Activated CD4-positive, alpha-beta T cell treated with anti-CD3 and anti-CD28 coated beads for 36 hours (primary cell): ENCODE measurements at regions of chr17 and their contacts with region 1.

Region 1: GRCh38 chr17:80263253-80264204 is 2.9 kb downstream of the RNF213 start:
- DNase-seq: peak; percentile 94
- ATAC-seq: peak; percentile 37
- H3K4me3 Mint-ChIP-seq: peak overlapping the region; percentile 98
- H3K27ac Mint-ChIP-seq: peak overlapping the region; percentile 91
- H3K4me1 Mint-ChIP-seq: peaks cover 55% of the 10 kb centered on the region
- H3K27me3 Mint-ChIP-seq: no peaks in the 10 kb centered on the region

Region 2: DNA sequence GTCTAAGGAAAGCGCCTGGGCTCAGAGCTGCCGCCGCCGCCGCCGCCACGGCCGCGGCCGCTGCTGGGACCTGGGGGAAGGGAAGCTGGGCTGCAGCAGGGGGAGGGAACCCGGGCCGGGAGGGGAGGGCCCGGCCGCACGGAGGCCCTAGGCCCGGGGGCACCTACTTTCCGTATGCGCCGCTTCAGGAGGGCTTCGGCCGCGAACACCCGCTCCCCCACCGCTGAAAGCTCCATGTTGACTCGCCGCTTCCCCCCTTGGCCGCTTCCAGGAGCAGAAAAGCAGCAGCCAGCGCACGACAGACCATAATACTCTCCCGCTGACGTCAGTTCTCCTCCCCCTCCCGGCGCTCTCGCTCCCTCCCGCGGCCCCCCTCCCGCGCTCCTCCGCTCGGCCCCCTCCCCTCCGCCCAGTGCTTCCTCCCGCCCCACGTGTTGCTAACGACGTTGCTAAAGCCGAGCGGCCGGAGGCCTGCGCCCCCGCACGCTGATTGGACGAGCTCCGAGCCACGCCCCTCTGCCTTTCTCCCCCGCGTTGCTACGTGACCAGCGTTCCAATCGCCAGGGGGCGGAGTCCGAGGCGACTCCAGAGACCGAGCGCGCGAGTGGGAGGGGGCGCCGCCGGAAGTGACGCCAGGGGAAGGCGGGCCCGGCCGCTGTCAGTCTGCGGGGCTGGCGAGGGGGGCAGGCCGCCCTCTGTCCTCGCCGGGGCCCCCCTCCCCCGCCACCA is 466.6 kb before region 1 on chr17 and contains the start of gene CBX8:
- CTCF ChIA-PET with region 1: no interaction called
- POLR2A ChIA-PET with region 1: no interaction called
- intact Hi-C with region 1: loop called in 1 of 2 experiments (anchors 2 kb)
- DNase-seq: peak; percentile 100
- ATAC-seq: peak; percentile 88
- H3K4me3 Mint-ChIP-seq: peak within 1 kb of the TSS; percentile 79
- H3K27ac Mint-ChIP-seq: peak within 1 kb of the TSS; percentile 55
- H3K4me1 Mint-ChIP-seq: peaks cover 33% of the 10 kb centered on the region
- H3K27me3 Mint-ChIP-seq: peaks cover 35% of the 10 kb centered on the region
- total RNA-seq, gene CBX8: 4.7 to 6.0 TPM

Region 3: DNA sequence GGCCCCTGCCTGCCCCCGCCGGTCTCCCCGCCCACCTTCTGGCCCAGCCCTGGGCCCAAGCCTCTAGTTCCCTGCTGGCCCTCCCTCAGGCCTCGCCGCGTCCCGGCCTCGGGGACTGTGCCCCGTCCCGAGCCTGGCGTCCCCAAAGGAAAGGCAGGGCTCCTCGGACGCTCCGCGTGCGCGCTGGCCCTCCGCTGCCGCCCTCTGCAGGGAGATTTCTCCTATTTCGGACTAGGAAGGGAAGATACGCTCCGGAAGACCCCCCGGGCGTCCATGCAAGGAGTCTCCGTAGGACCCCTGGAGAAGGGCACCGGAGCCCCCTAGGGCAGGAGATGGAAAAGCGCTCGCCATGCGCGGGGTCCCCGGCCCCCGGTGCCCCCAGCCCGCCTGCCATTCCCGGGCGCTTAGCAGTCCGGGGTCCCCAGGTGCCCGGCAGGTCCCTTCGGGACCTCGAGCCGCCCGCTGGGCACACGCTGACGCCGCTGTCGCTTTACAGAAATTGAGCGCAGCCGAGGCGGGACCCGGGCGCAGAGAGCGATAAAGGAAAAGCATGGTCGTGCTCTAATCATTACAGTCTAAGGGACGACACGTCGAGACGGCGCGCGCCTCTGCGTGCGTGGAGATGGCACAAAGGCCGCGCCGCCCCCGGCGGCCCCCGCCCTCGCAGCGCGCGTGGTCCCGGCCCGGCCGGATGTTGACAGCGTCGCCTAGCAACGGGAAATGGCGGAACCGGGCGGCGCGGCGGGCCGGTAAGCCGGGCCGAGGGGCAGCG is 227.4 kb before region 1 on chr17 and contains the start of gene CCDC40:
- CTCF ChIA-PET with region 1: no interaction called
- POLR2A ChIA-PET with region 1: no interaction called
- intact Hi-C with region 1: loop called in 1 of 2 experiments (anchors 2 kb)
- DNase-seq: peak; percentile 82
- ATAC-seq: peak; percentile 72
- H3K4me3 Mint-ChIP-seq: peak within 1 kb of the TSS; percentile 82
- H3K27ac Mint-ChIP-seq: no peak within 1 kb of the TSS
- H3K4me1 Mint-ChIP-seq: peaks cover 7% of the 10 kb centered on the region
- H3K27me3 Mint-ChIP-seq: peaks cover 12% of the 10 kb centered on the region
- total RNA-seq, gene CCDC40: 0.56 to 0.57 TPM

Region 4: DNA sequence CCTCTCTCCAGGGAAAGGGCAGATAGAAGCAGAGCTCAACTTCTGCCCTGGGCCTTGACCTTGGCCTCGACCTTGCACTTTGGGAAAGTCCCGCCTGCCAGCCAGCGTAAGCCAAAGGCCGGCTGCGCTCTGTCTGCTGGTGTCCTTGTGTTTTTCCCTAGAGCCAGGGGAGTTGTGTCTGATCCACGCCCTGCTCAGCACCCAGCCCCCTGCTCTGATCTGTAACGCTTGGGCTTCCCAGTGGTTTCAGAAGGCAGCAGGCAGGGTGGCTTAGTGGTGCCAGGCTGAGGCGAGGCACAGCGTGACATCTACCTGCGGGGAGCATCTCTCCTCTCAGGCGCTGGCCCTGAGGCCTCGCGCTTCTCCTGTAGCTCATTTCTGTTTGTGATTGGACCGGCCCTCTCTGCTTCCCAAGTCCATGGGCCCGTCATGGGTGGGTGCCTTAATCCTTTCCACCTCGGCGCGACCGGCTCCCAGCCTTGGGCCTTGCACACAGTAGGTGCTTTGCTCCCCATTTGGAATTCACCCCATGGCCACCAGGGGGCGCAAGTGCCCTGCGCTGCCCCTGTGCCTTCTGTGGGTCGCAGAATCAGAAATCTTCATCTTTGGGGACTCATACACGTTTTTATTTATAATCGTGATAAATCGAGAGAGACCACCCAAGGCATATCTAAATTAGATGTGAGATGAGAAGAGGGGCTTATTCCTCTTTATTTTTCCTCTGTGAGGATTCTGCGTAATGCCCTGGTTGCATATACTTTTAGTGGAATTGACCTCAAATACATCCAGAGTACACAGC is 67.6 kb before region 1 on chr17:
- CTCF ChIA-PET with region 1: no interaction called
- POLR2A ChIA-PET with region 1: no interaction called
- intact Hi-C with region 1: loop called in 1 of 2 experiments (anchors 1 kb)
- DNase-seq: peak; percentile 74
- ATAC-seq: peak; percentile 53
- H3K4me3 Mint-ChIP-seq: no peak overlapping the region
- H3K27ac Mint-ChIP-seq: no peak overlapping the region
- H3K4me1 Mint-ChIP-seq: no peaks in the 10 kb centered on the region
- H3K27me3 Mint-ChIP-seq: peaks cover 3% of the 10 kb centered on the region

Region 5: GRCh38 chr17:80430446-80431245 is 167.1 kb after region 1 on chr17:
- CTCF ChIA-PET with region 1: no interaction called
- POLR2A ChIA-PET with region 1: no interaction called
- intact Hi-C with region 1: no loop called
- DNase-seq: no peak
- ATAC-seq: no peak
- H3K4me3 Mint-ChIP-seq: no peak overlapping the region
- H3K27ac Mint-ChIP-seq: no peak overlapping the region
- H3K4me1 Mint-ChIP-seq: peaks cover 9% of the 10 kb centered on the region
- H3K27me3 Mint-ChIP-seq: no peaks in the 10 kb centered on the region

Region 6: GRCh38 chr17:80454557-80455335 is 191.2 kb after region 1 on chr17:
- CTCF ChIA-PET with region 1: no interaction called
- POLR2A ChIA-PET with region 1: no interaction called
- intact Hi-C with region 1: loop called in 1 of 2 experiments (anchors 2 kb)
- DNase-seq: peak; percentile 98
- ATAC-seq: peak; percentile 93
- H3K4me3 Mint-ChIP-seq: peak overlapping the region; percentile 99
- H3K27ac Mint-ChIP-seq: peak overlapping the region; percentile 94
- H3K4me1 Mint-ChIP-seq: peaks cover 23% of the 10 kb centered on the region
- H3K27me3 Mint-ChIP-seq: peaks cover 13% of the 10 kb centered on the region

Region 7: DNA sequence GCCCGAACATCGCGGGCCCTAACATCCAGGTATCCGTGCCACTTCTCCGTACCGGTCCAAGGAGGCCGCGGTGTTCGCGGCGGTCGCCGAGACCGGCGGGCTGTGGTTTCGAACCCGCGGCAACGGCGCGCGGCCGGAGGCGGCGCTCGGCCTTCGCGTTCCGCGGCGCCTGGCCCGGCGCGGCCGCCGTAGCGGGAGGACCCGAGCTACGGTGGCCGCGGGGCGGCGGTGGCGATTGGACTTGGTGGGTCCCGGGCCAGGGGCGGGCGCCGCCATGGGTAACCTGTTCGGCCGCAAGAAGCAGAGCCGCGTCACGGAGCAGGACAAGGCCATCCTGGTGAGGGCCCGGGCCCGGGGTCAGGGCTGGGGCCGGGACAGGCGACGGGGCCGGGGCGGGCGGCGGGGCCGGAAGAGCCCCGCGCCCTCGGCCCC is 728.1 kb after region 1 on chr17 and contains the start of gene CHMP6:
- CTCF ChIA-PET with region 1: no interaction called
- POLR2A ChIA-PET with region 1: no interaction called
- intact Hi-C with region 1: loop called in 1 of 2 experiments (anchors 5 kb)
- DNase-seq: peak; percentile 83
- ATAC-seq: peak; percentile 49
- H3K4me3 Mint-ChIP-seq: peak within 1 kb of the TSS; percentile 69
- H3K27ac Mint-ChIP-seq: peak within 1 kb of the TSS; percentile 74
- H3K4me1 Mint-ChIP-seq: peaks cover 21% of the 10 kb centered on the region
- H3K27me3 Mint-ChIP-seq: peaks cover 3% of the 10 kb centered on the region
- total RNA-seq, gene CHMP6: 15.9 to 19.4 TPM